GM10248 (cell line): ENCODE measurements at regions of chr1 and their contacts with region 1.

Region 1: GRCh38 chr1:6235296-6235677 is 477 bp downstream of the ICMT start:
- DNase-seq: no peak
- CTCF ChIP-seq: no peak

Region 2: DNA sequence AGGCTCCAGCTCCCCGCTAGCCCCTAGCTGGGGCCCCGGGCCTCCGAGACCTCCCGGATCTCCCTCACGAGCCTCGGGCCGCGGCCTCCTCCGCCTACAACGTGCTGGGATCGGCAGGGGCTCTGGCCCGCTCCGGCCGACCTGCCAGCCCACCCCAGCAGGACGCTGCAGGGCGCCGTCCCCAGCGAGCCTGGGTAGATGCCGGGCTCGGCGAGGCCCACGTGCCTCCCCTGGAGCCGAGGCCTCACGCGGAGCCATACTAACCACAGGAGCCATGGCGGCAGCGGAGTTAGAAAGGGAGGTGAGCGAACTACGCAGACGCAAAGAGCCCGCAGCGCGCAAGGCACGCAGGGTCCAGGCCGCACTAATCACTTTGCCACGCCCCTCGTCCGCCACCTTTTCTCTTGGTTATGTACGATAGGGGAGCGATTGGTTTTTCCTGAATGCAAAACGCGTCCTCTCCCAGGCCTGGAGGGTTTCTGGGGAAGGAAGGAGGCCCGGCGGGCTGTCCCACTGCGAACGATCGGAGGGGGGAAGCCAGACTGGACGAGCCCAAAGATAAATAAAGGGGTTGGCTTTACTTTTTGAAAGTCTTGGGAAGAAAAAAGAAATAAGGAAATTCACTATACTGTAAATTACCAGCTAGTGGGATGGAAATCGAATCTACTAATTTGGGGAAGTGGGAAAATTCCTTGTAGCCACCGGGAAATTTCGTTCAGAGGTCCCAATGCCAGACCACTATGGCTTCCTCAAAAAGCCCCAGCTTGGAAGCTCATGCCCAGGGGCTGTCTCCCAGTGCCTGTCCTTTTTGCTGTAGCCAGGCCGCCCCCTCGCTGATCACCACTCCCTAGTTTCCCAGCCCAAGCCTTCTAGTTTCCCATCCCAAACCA is 35.7 kb before region 1 on chr1 and contains the start of gene RPL22:
- CTCF ChIA-PET with region 1: interaction called, 10 read pairs
- POLR2A ChIA-PET with region 1: no interaction called
- DNase-seq: peak; percentile 94
- CTCF ChIP-seq: no peak

Region 3: DNA sequence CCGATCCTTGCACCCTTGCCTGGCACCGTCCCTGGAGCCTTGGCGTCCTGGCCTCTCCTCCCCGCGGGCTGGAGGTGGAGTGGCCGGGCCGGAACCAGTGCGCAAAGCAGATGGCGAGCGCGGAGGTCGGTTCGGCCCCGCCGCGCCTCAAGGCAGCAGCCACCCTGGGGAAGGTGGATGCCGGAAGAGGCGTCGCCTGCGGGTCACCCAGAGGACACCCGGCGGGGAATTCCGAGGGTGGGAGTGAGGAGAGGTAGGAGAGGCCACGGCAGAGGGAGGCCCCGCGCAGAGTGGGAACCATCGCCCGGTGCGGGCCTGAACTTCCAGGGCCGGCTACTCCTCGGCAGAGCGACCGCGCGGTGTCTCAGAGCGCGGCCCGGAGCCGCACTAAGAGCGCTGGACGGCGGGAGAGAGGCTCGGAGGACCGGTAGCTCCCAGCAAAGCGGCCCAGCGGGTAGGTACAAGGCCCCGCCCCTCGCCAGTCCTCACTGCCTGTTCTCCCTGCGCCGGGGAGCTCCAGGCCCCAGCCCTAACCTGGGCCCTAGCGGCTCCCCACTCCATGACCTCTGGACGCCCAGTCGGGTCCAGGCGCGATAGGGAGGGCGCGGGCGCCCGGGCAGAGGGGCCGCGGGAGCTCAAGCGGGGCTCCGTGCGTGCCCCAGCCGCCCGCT is 29.3 kb before region 1 on chr1 and contains the start of gene RNF207:
- CTCF ChIA-PET with region 1: interaction called, 20 read pairs
- POLR2A ChIA-PET with region 1: no interaction called
- DNase-seq: peak; percentile 92
- CTCF ChIP-seq: no peak

Region 4: GRCh38 chr1:6254691-6255090 is 19.4 kb after region 1 on chr1:
- CTCF ChIA-PET with region 1: no interaction called
- POLR2A ChIA-PET with region 1: no interaction called
- DNase-seq: no peak
- CTCF ChIP-seq: no peak

Region 5: DNA sequence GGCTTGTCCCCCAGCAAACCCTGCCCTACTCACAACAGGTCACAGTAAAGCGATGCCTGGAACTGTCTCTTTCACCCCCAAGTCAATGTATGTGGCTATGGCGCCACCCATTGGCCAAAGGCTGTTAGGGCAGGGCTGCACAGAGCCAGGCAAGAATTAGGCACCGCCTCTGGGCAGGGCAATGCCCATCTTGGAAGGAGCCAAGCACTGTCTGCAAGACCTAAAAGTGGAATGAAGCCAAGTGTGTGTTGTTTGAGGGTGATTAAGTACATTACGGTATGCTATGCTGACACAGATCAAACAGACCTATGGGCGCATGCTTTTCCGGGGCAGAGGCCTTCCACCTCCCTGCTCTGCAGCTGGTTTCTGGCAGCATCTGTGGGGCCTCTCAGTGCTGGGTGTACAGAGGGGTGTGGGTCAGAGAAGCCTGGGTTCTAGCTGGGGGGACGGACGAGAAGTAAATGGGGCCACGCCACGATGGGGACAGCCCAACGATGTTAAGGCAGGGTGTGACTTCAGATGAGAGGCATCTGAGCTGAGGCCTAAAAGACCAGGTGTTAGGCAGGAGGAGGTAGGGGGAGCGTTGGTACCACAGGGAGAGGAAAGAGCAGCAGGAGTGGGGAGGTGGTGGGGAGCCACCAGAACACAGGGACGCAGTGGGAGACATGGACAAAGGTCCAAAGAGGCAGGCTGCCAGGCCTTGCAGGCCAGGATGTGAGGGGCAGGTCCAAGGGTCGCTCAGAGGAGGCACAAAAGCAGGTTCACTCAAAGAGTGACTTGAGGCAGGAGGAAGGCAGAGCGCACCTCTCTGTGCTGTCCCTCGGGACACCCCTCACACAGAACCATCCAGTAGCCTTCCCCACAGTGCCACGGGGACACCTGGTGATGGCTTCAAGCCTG is 108.5 kb after region 1 on chr1:
- CTCF ChIA-PET with region 1: interaction called, 10 read pairs
- POLR2A ChIA-PET with region 1: no interaction called
- DNase-seq: peak; percentile 80
- CTCF ChIP-seq: peak; percentile 93

Region 6: DNA sequence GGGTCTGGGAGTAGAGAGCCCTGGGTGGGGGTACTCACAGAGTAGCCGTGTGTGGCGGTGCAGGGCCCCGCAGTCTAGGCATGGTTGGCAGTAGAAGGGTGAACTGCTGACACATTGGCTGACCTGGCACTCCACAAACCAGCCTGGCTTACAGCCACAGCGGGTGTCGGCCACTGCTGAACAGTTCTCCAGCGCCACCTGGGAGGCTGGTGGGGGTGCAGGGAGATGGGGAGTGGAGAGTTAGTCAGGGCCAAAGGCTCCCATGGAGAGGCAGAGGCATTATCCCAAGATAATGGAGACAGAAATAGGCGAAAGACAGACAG is 229.2 kb after region 1 on chr1:
- CTCF ChIA-PET with region 1: no interaction called
- POLR2A ChIA-PET with region 1: no interaction called
- DNase-seq: no peak
- CTCF ChIP-seq: no peak